ENCODE measurements at regions of chr17 and their contacts with region 1.

Region 1: DNA sequence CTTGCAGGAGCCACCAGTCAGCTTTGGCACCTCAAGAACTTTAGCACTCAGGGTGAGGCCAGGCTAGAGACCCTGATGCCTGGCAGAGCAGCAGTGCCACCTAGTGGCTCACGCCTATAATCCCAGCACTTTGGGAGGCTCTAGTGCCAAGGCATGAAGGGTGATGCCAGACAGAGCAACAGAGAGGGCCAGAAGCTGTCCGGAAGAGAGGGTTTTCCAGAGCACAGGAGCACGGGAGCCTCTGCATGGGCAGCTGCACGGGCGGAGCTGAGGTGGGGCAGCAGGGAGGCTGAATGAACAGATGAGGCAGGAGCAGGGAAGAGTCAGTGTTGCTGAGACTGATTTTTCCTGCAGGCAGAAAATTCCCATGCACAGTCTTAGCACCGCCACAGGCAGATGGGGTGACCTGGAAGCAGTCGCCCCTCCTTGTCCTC is 38.9 kb downstream of the MYH3 start:
- DNase-seq: peak; percentile 64
- ATAC-seq: peak; percentile 89 to 91

Region 2: DNA sequence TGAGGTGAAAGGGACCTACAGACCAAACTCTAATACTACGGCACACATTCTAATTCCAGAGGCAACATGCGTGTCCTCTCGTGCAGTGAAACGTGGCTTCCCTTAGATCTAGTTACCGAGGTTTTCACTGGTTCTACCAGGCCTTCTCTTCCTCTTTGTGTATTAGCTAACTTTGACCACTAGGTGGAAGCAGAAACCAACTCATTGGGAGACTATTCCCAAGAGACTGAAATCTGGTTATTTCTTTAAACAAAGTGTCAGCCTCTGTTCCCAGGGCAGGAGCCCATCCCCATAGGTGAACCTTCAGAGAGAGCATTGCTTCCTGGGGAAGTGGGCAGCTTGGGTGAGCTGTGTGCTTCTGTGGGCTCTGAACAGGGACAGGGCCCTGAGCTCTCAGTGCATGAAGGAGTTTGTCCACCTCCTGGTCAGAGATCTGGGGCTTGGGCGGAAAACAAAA is 693.5 kb before region 1 on chr17:
- intact Hi-C with region 1: loop called (anchors 2 to 10 kb)
- DNase-seq: no peak
- ATAC-seq: peak; percentile 51 to 77

Region 3: GRCh38 chr17:10172241-10172741 is 445.9 kb before region 1 on chr17:
- intact Hi-C with region 1: no loop called
- DNase-seq: no peak
- ATAC-seq: peak; percentile 51 to 61

Region 4: DNA sequence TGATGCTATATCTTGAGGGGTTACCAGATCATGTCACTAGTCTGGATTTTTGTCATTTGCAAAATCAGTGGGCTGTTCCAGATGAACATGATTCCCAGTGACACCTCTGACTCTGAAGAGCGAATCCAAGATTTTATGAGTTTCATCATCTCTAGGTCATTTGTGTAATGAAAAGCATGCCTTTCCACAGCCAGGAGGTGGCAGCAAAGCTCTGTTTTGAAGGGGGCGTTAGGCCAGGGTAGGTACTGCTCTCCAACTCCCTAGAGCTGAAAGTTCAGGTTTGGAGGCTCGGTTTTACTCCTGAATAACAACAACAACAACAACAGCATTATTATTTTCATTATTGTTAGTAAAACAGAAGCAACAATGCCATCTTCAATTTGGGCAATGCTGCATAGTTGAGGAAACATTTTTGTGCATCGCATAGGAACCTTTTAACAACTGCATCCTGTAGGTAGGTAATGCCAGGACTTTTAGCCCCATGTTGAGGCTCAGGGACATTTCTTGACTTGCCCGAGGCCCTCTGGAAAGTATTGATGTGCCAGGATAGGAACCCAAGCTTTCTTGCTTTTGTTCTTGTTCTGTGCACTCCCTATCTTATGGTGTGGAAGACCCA is 322.4 kb before region 1 on chr17:
- intact Hi-C with region 1: loop called in 1 of 2 experiments (anchors 10 kb)
- DNase-seq: peak; percentile 47
- ATAC-seq: peak; percentile 38 to 42

Region 5: GRCh38 chr17:10327640-10328039 is 290.6 kb before region 1 on chr17:
- intact Hi-C with region 1: loop called (anchors 2 to 5 kb)
- DNase-seq: peak; percentile 81
- ATAC-seq: peak in 1 of 2 donors; percentile 76

Region 6: GRCh38 chr17:10661437-10661836 is 43.2 kb after region 1 on chr17:
- intact Hi-C with region 1: no loop called
- DNase-seq: no peak
- ATAC-seq: no peak

Measured in left cardiac atrium (tissue), 4 donors.